ENCODE measurements at regions of chr22 and their contacts with region 1.

Region 1: GRCh38 chr22:36123673-36124630 is 36.6 kb downstream of the APOL3 start:
- DNase-seq: peak; percentile 90 to 93 (median 92)
- H3K4me3 ChIP-seq: peak overlapping the region in 1 of 2 donors; percentile 59
- H3K4me3 Mint-ChIP-seq: peak overlapping the region; percentile 72 to 84 (median 80)
- H3K27ac ChIP-seq: peak overlapping the region; percentile 37
- H3K27ac Mint-ChIP-seq: peak overlapping the region; percentile 66 to 98 (median 93)
- H3K4me1 ChIP-seq: peaks cover 11% of the 10 kb centered on the region
- H3K4me1 Mint-ChIP-seq: peaks cover 3 to 18% (median 9%) of the 10 kb centered on the region in 4 donors
- H3K27me3 ChIP-seq: no peaks in the 10 kb centered on the region
- H3K27me3 Mint-ChIP-seq: no peaks in the 10 kb centered on the region

Region 2: GRCh38 chr22:35430897-35431322 is 693.0 kb before region 1 on chr22:
- CTCF ChIA-PET with region 1: no interaction called
- POLR2A ChIA-PET with region 1: no interaction called
- intact Hi-C with region 1: loop called (anchors 2 kb)
- DNase-seq: peak; percentile 53 to 64 (median 55)
- H3K4me3 ChIP-seq: no peak overlapping the region
- H3K4me3 Mint-ChIP-seq: no peak overlapping the region
- H3K27ac ChIP-seq: no peak overlapping the region
- H3K27ac Mint-ChIP-seq: no peak overlapping the region
- H3K4me1 ChIP-seq: no peaks in the 10 kb centered on the region
- H3K4me1 Mint-ChIP-seq: peaks cover 0 to 5% (median 3%) of the 10 kb centered on the region in 4 donors
- H3K27me3 ChIP-seq: no peaks in the 10 kb centered on the region
- H3K27me3 Mint-ChIP-seq: no peaks in the 10 kb centered on the region

Region 3: GRCh38 chr22:35582861-35583670 is 540.9 kb before region 1 on chr22:
- CTCF ChIA-PET with region 1: interaction called, 3 read pairs
- POLR2A ChIA-PET with region 1: no interaction called
- intact Hi-C with region 1: loop called (anchors 2 kb)
- DNase-seq: peak; percentile 38 to 56 (median 49)
- H3K4me3 ChIP-seq: no peak overlapping the region
- H3K4me3 Mint-ChIP-seq: no peak overlapping the region
- H3K27ac ChIP-seq: no peak overlapping the region
- H3K27ac Mint-ChIP-seq: no peak overlapping the region
- H3K4me1 ChIP-seq: no peaks in the 10 kb centered on the region
- H3K4me1 Mint-ChIP-seq: peaks cover 0 to 2% (median 0%) of the 10 kb centered on the region in 4 donors
- H3K27me3 ChIP-seq: no peaks in the 10 kb centered on the region
- H3K27me3 Mint-ChIP-seq: no peaks in the 10 kb centered on the region

Region 4: DNA sequence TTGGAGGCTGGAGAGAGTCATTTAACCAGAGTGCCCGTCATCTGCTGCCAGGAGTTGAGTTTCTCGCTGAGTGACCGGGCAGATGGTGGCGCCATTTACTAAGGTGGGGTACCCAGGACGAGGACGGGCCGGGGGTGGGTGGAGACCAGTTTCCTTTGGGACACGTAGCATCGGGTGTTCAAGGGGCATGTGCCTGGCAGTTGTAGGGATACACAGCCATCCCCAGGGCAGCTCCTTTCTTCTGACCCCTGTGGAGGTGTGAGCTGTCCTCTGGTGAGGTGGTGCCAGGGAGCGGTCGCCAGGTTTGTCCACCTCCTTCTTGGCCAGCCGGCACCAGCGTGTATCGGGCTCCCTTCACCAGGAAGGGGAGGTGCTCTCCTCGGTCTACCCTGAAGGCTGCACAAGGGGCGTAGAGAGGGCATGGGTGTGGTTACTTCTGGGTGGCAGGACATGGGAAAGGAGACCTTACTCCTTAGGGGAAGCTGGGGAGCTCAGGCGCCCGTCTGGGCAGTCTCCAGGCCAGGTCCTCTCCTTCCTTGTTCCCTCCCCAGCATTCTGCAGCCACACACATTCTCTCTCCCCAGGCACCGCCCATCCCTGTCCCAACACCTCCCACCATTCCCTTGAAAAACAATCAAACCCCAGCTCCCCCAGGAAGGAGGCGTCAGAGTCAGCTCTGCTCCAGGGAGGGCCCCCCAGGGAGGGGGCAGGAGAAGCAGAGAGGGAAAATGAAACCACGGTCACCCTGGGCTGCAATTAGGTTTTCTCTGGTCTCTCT is 496.5 kb before region 1 on chr22:
- CTCF ChIA-PET with region 1: interaction called, 5 read pairs
- POLR2A ChIA-PET with region 1: no interaction called
- intact Hi-C with region 1: loop called (anchors 1 kb)
- DNase-seq: peak in 4 of 5 donors; percentile 22 to 37 (median 31)
- H3K4me3 ChIP-seq: peak overlapping the region in 1 of 2 donors; percentile 30
- H3K4me3 Mint-ChIP-seq: peak overlapping the region; percentile 31 to 85 (median 72)
- H3K27ac ChIP-seq: no peak overlapping the region
- H3K27ac Mint-ChIP-seq: peak overlapping the region; percentile 10 to 74 (median 66)
- H3K4me1 ChIP-seq: peaks cover 16% of the 10 kb centered on the region
- H3K4me1 Mint-ChIP-seq: peaks cover 10 to 23% (median 18%) of the 10 kb centered on the region in 4 donors
- H3K27me3 ChIP-seq: no peaks in the 10 kb centered on the region
- H3K27me3 Mint-ChIP-seq: peaks cover 0 to 2% of the 10 kb centered on the region in 2 donors

Region 5: GRCh38 chr22:36008131-36008530 is 115.8 kb before region 1 on chr22:
- CTCF ChIA-PET with region 1: no interaction called
- POLR2A ChIA-PET with region 1: no interaction called
- intact Hi-C with region 1: no loop called
- DNase-seq: no peak
- H3K4me3 ChIP-seq: no peak overlapping the region
- H3K4me3 Mint-ChIP-seq: no peak overlapping the region
- H3K27ac ChIP-seq: no peak overlapping the region
- H3K27ac Mint-ChIP-seq: no peak overlapping the region
- H3K4me1 ChIP-seq: no peaks in the 10 kb centered on the region
- H3K4me1 Mint-ChIP-seq: no peaks in the 10 kb centered on the region
- H3K27me3 ChIP-seq: no peaks in the 10 kb centered on the region
- H3K27me3 Mint-ChIP-seq: peaks cover 2 to 27% of the 10 kb centered on the region in 2 donors

Region 6: GRCh38 chr22:36084717-36085116 is 39.2 kb before region 1 on chr22:
- CTCF ChIA-PET with region 1: no interaction called
- POLR2A ChIA-PET with region 1: no interaction called
- intact Hi-C with region 1: no loop called
- DNase-seq: no peak
- H3K4me3 ChIP-seq: no peak overlapping the region
- H3K4me3 Mint-ChIP-seq: no peak overlapping the region
- H3K27ac ChIP-seq: no peak overlapping the region
- H3K27ac Mint-ChIP-seq: no peak overlapping the region
- H3K4me1 ChIP-seq: no peaks in the 10 kb centered on the region
- H3K4me1 Mint-ChIP-seq: no peaks in the 10 kb centered on the region
- H3K27me3 ChIP-seq: no peaks in the 10 kb centered on the region
- H3K27me3 Mint-ChIP-seq: peaks cover 0 to 2% of the 10 kb centered on the region in 2 donors

Region 7: GRCh38 chr22:36144886-36145541 is 21.1 kb after region 1 on chr22:
- CTCF ChIA-PET with region 1: interaction called, 11 read pairs
- POLR2A ChIA-PET with region 1: no interaction called
- intact Hi-C with region 1: no loop called
- DNase-seq: peak in 1 of 5 donors; percentile 26
- H3K4me3 ChIP-seq: no peak overlapping the region
- H3K4me3 Mint-ChIP-seq: no peak overlapping the region
- H3K27ac ChIP-seq: no peak overlapping the region
- H3K27ac Mint-ChIP-seq: peak overlapping the region; percentile 74 to 83 (median 79)
- H3K4me1 ChIP-seq: peaks cover 14% of the 10 kb centered on the region
- H3K4me1 Mint-ChIP-seq: peaks cover 16 to 63% (median 40%) of the 10 kb centered on the region in 4 donors
- H3K27me3 ChIP-seq: no peaks in the 10 kb centered on the region
- H3K27me3 Mint-ChIP-seq: no peaks in the 10 kb centered on the region

Region 8: GRCh38 chr22:36234919-36235318 is 111.0 kb after region 1 on chr22:
- CTCF ChIA-PET with region 1: no interaction called
- POLR2A ChIA-PET with region 1: no interaction called
- intact Hi-C with region 1: no loop called
- DNase-seq: no peak
- H3K4me3 ChIP-seq: no peak overlapping the region
- H3K4me3 Mint-ChIP-seq: peak overlapping the region in 5 of 8 donors; percentile 6 to 99 (median 54)
- H3K27ac ChIP-seq: no peak overlapping the region
- H3K27ac Mint-ChIP-seq: peak overlapping the region in 6 of 7 donors; percentile 3 to 84 (median 72)
- H3K4me1 ChIP-seq: peaks cover 42% of the 10 kb centered on the region
- H3K4me1 Mint-ChIP-seq: peaks cover 41 to 65% (median 51%) of the 10 kb centered on the region in 4 donors
- H3K27me3 ChIP-seq: no peaks in the 10 kb centered on the region
- H3K27me3 Mint-ChIP-seq: no peaks in the 10 kb centered on the region